ENCODE measurements at regions of chr6 and their contacts with region 1.

Region 1: GRCh38 chr6:15691250-15691869 is 28.5 kb upstream of the DTNBP1 start:
- DNase-seq: peak; percentile 89
- CTCF ChIP-seq: peak; percentile 99

Region 2: GRCh38 chr6:14606353-14606752 is 1085.0 kb before region 1 on chr6:
- in situ Hi-C with region 1: no loop called
- DNase-seq: no peak
- CTCF ChIP-seq: no peak

Region 3: GRCh38 chr6:14734416-14735340 is 956.7 kb before region 1 on chr6:
- in situ Hi-C with region 1: no loop called
- DNase-seq: peak; percentile 47
- CTCF ChIP-seq: no peak

Region 4: GRCh38 chr6:15096894-15097837 is 594.2 kb before region 1 on chr6:
- in situ Hi-C with region 1: no loop called
- DNase-seq: no peak
- CTCF ChIP-seq: no peak

Region 5: DNA sequence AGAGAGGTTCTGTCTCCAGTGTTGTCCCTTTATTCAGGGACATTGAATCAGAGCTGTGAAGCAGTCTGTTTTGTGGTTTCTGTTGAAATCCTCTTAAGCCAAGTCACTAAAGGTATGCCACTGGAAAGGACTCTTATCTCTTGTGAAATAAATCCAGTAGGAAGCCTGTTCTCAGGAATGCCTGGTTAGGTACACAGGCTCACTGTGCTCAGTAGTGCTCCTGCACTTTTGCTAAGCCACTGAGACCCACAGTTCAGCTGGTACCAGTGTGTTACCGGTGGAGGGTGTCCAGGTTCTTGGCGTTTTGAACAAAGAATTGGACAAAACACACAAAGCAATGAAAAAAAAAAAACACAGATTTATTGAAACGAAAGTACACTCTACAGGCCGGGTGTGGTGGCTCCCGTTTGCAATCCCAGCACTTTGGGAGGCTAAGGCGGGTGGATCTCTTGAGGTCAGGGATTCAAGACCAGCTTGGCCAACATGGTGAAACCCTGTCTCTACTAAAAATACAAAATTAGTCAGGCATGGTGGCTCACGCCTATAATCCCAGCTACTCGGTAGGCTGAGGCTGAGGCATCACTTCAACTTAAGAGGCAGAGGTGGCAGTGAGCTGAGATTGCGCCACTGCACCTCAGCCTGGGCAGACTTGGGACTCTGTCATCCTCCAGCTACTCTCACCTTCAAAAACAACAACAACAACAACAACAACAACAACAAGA is 259.4 kb before region 1 on chr6:
- in situ Hi-C with region 1: no loop called
- DNase-seq: no peak
- CTCF ChIP-seq: no peak

Region 6: GRCh38 chr6:16183187-16183664 is 491.9 kb after region 1 on chr6:
- in situ Hi-C with region 1: loop called (anchors 10 kb)
- DNase-seq: peak; percentile 54
- CTCF ChIP-seq: peak; percentile 41

Region 7: GRCh38 chr6:16206595-16207037 is 515.3 kb after region 1 on chr6:
- in situ Hi-C with region 1: loop called (anchors 10 kb)
- DNase-seq: peak; percentile 70
- CTCF ChIP-seq: peak; percentile 85

Measured in GM13976 (cell line).